ENCODE measurements at regions of chr7 and their contacts with region 1.

Region 1: GRCh38 chr7:121604627-121605316 is 208.7 kb upstream of the FAM3C start:
- DNase-seq: no peak
- H3K4me3 ChIP-seq: no peak overlapping the region
- H3K27ac ChIP-seq: no peak overlapping the region
- H3K4me1 ChIP-seq: no peaks in the 10 kb centered on the region
- H3K27me3 ChIP-seq: no peaks in the 10 kb centered on the region
- CTCF ChIP-seq: no peak

Region 2: GRCh38 chr7:121278120-121279021 is 326.4 kb before region 1 on chr7:
- CTCF ChIA-PET with region 1: no interaction called
- POLR2A ChIA-PET with region 1: no interaction called
- intact Hi-C with region 1: no loop called
- DNase-seq: no peak
- H3K4me3 ChIP-seq: no peak overlapping the region
- H3K27ac ChIP-seq: no peak overlapping the region
- H3K4me1 ChIP-seq: no peaks in the 10 kb centered on the region
- H3K27me3 ChIP-seq: no peaks in the 10 kb centered on the region
- CTCF ChIP-seq: no peak

Region 3: GRCh38 chr7:121398246-121398645 is 206.5 kb before region 1 on chr7:
- CTCF ChIA-PET with region 1: no interaction called
- POLR2A ChIA-PET with region 1: no interaction called
- intact Hi-C with region 1: no loop called
- DNase-seq: no peak
- H3K4me3 ChIP-seq: no peak overlapping the region
- H3K27ac ChIP-seq: no peak overlapping the region
- H3K4me1 ChIP-seq: peaks cover 22% of the 10 kb centered on the region
- H3K27me3 ChIP-seq: no peaks in the 10 kb centered on the region
- CTCF ChIP-seq: no peak

Region 4: GRCh38 chr7:121676168-121676567 is 71.4 kb after region 1 on chr7:
- CTCF ChIA-PET with region 1: no interaction called
- POLR2A ChIA-PET with region 1: no interaction called
- intact Hi-C with region 1: no loop called
- DNase-seq: no peak
- H3K4me3 ChIP-seq: no peak overlapping the region
- H3K27ac ChIP-seq: no peak overlapping the region
- H3K4me1 ChIP-seq: no peaks in the 10 kb centered on the region
- H3K27me3 ChIP-seq: no peaks in the 10 kb centered on the region
- CTCF ChIP-seq: no peak

Region 5: GRCh38 chr7:123028339-123028738 is 1423.6 kb after region 1 on chr7:
- CTCF ChIA-PET with region 1: no interaction called
- POLR2A ChIA-PET with region 1: interaction called, 10 read pairs
- intact Hi-C with region 1: no loop called
- DNase-seq: no peak
- H3K4me3 ChIP-seq: no peak overlapping the region
- H3K27ac ChIP-seq: no peak overlapping the region
- H3K4me1 ChIP-seq: no peaks in the 10 kb centered on the region
- H3K27me3 ChIP-seq: no peaks in the 10 kb centered on the region
- CTCF ChIP-seq: no peak